ENCODE measurements at regions of chr1 and their contacts with region 1.

Region 1: DNA sequence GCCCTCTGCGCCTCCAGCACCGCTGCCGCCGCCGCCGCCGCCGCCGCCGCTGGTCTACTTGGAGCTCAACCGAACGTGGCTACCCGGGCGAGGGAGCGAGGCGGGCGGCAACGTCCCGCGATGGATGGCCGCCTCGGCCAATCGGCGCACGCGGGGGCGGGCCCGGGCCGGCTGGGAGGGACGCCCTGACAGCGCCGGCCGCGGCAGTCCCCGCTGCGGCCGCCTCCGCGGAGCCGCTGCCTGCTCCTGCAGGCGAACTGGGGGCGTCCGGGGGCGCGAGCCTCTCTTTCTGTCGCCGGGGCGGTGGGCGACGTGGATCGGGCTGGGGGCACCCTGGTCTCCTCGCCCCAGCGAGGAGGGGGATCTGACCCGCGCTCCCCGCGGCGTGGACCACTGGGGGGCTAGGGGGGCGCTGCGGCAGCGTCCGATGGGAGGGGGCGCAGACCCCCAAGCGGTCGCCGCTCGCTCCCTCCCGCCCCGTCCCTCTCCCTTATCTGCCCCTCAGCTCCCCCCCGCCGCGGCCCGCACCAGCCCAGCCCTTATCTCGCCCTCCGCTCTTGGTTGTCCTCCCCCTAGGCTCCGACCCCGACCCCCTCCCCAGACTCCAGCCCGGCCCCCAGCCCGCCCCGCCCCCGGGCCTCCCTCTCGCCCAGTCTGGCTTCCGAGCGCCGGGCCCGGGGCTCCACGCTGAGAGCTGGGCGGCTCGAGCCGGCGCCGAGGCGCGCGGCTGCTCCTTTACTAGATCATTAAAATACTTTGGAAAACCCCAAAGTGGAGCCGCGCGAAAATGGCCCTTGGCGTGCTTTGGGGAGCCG is at the start of gene SSBP3:
- DNase-seq: peak; percentile 92
- H3K4me3 ChIP-seq: peak within 1 kb of the TSS; percentile 65 to 87
- H3K27ac ChIP-seq: peak within 1 kb of the TSS; percentile 85 to 87
- H3K4me1 ChIP-seq: peaks cover 54% of the 10 kb centered on the region
- H3K27me3 ChIP-seq: no peaks in the 10 kb centered on the region
- CTCF ChIP-seq: no peak
- POLR2A ChIP-seq: peak; percentile 76
- total RNA-seq, gene SSBP3: 91.6 to 99.0 TPM

Region 2: GRCh38 chr1:54121482-54122134 is 284.9 kb before region 1 on chr1:
- intact Hi-C with region 1: loop called (anchors 10 kb)
- DNase-seq: peak; percentile 85
- H3K4me3 ChIP-seq: peak overlapping the region; percentile 12 to 30
- H3K27ac ChIP-seq: peak overlapping the region in 1 of 2 donors; percentile 7
- H3K4me1 ChIP-seq: peaks cover 12% of the 10 kb centered on the region
- H3K27me3 ChIP-seq: no peaks in the 10 kb centered on the region
- CTCF ChIP-seq: peak; percentile 51 to 75 (median 66)
- POLR2A ChIP-seq: no peak

Region 3: GRCh38 chr1:54220004-54220811 is 186.3 kb before region 1 on chr1:
- intact Hi-C with region 1: no loop called
- DNase-seq: peak; percentile 86
- H3K4me3 ChIP-seq: no peak overlapping the region
- H3K27ac ChIP-seq: peak overlapping the region; percentile 9 to 73
- H3K4me1 ChIP-seq: peaks cover 44% of the 10 kb centered on the region
- H3K27me3 ChIP-seq: no peaks in the 10 kb centered on the region
- CTCF ChIP-seq: no peak
- POLR2A ChIP-seq: no peak

Region 4: GRCh38 chr1:54273092-54273794 is 133.3 kb before region 1 on chr1:
- intact Hi-C with region 1: loop called (anchors 5 kb)
- DNase-seq: peak; percentile 80
- H3K4me3 ChIP-seq: no peak overlapping the region
- H3K27ac ChIP-seq: peak overlapping the region; percentile 84 to 93
- H3K4me1 ChIP-seq: peaks cover 71% of the 10 kb centered on the region
- H3K27me3 ChIP-seq: no peaks in the 10 kb centered on the region
- CTCF ChIP-seq: peak; percentile 11 to 42 (median 24)
- POLR2A ChIP-seq: no peak

Region 5: DNA sequence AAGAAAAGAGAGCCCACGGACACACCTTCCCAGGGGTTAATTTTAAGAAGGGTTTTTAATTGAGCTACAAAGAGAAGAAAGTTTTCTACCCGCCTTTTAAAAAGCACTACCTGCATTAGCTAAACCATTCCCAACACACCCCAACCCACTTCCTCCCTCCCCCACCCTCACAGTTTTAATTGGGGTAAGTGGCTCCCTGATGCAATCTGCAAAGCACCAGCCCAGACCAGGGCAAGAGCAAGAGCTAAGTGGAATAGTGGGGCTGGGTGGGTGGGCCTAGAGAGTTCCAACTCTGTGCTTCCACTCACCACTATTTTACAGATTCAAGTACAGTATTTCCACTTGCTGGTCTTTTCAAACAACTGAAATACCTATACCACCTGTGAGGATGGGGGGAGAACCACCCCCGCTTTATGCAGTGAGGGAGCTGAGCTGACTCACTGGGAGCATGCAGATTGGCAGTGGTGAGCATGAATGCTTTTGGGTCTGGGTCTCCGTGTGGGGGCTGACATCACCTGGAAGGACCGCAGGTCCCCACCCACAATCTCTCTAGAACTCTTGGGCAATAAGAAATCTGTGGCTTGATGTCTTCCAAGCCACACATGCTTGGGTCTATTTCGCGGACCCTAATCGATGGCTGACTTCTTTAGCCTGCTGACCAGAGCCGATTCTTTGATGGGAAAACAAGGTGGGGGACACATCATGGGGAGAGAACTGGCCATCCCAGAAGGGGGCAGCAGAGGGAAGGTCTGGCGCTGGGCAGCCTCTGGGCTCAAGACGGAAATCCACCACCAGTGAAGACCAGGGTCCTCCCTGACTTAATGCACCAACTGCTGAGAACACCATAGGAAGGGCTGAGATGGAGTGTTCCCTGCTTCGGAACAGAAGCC is 95.9 kb before region 1 on chr1:
- intact Hi-C with region 1: no loop called
- DNase-seq: no peak
- H3K4me3 ChIP-seq: no peak overlapping the region
- H3K27ac ChIP-seq: peak overlapping the region in 1 of 2 donors; percentile 75
- H3K4me1 ChIP-seq: peaks cover 63% of the 10 kb centered on the region
- H3K27me3 ChIP-seq: no peaks in the 10 kb centered on the region
- CTCF ChIP-seq: peak in 2 of 3 experiments; percentile 7 to 31
- POLR2A ChIP-seq: no peak

Region 6: DNA sequence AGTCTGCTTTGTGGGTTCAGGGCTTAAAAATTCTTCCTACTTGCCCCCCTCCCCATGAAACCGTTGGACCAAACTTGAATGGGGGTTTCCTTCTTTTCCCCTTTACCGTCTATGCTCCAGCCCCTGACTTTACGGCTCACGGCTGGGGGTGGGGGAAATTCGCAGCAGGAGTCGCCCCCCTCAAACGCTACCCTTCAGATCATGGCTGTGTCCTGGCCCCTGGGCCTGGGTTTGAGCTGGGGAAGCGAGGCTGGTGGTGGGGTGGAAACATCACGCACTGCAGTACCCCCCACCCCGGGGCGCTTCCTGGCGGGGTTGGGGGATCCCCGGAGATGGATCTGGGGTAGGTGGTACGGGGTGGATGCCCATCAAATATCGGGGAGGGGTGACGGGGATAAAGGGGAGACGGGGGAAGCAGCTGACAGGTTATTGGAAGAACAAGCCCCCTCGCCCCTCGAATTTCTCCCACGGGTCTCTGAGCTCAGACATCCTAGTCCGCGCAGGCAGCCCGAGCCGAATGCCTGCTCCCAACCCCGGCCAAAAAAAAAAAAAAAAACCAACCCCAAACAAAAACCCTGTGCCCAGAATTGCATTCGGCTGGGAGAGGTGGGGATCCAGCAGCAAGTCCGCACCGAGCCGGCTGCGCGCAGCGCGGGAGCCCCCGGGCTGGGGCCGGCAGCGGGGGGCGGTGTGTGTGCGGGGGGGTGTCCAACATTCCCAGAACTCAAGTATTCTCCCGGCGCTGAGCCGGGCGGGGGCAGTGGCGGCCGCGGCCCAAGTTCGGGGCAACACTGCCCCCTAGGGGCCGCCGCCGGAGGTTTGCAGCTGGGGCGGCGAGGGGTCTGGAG is 82.5 kb after region 1 on chr1:
- intact Hi-C with region 1: loop called (anchors 2 kb)
- DNase-seq: peak; percentile 86
- H3K4me3 ChIP-seq: peak overlapping the region; percentile 57 to 68
- H3K27ac ChIP-seq: peak overlapping the region; percentile 77 to 86
- H3K4me1 ChIP-seq: peaks cover 27% of the 10 kb centered on the region
- H3K27me3 ChIP-seq: no peaks in the 10 kb centered on the region
- CTCF ChIP-seq: peak; percentile 97 to 99 (median 98)
- POLR2A ChIP-seq: no peak

Region 7: GRCh38 chr1:54774820-54775498 is 368.4 kb after region 1 on chr1:
- intact Hi-C with region 1: no loop called
- DNase-seq: peak; percentile 85
- H3K4me3 ChIP-seq: peak overlapping the region in 1 of 2 donors; percentile 41
- H3K27ac ChIP-seq: no peak overlapping the region
- H3K4me1 ChIP-seq: peaks cover 7% of the 10 kb centered on the region
- H3K27me3 ChIP-seq: no peaks in the 10 kb centered on the region
- CTCF ChIP-seq: no peak
- POLR2A ChIP-seq: no peak